ENCODE measurements at regions of chr14 and their contacts with region 1.

Region 1: GRCh38 chr14:20613094-20614037 is 22.2 kb upstream of the RNASE12 start:
- DNase-seq: peak; percentile 88 to 89
- ATAC-seq: peak; percentile 90
- H3K4me3 ChIP-seq: peak overlapping the region; percentile 56 to 96
- H3K27ac ChIP-seq: peak overlapping the region in 1 of 2 donors; percentile 84
- H3K4me1 ChIP-seq: peaks cover 0 to 1% of the 10 kb centered on the region in 2 donors
- H3K27me3 ChIP-seq: no peaks in the 10 kb centered on the region

Region 2: GRCh38 chr14:20305265-20306078 is 307.9 kb before region 1 on chr14 and contains the start of gene TTC5:
- intact Hi-C with region 1: no loop called
- DNase-seq: peak; percentile 88 to 95
- ATAC-seq: peak; percentile 94
- H3K4me3 ChIP-seq: peak within 1 kb of the TSS; percentile 89 to 93
- H3K27ac ChIP-seq: peak within 1 kb of the TSS in 1 of 2 donors; percentile 12
- H3K4me1 ChIP-seq: no peaks in the 10 kb centered on the region
- H3K27me3 ChIP-seq: no peaks in the 10 kb centered on the region
- total RNA-seq, gene TTC5: 12.0 to 15.4 TPM

Region 3: DNA sequence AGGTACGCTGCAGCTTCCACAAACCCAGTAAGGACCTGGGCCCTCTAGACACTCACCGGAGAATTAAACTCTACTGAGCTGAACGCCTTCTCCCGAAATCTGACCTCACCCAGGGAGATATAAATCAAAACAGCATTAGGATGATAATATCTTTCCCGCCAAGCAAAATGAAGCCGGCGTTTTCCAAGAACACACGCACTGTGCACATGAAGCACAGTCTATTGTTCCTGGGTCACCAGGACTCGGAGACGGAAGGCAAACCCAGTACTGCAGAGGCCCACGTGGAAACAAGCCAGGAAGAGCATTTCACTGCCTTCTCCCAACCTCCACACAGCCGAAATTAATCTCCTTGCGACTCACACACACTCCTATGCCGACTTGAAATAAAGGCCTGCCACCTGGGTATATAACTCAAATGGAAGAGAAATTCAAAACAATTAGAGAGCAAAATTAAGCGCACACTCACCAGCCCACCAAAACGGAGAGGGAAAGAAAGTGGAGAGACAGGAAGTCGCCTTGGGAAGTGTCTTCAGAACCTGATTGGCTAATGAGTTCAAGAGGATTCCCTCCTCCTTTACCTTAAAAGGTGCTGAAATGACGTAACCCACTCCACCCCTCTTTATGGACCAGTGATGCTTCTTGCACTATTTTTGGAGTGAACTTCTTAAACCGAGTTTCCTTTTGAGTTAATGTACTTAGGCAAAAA is 280.4 kb before region 1 on chr14 and contains the start of gene CCNB1IP1:
- intact Hi-C with region 1: loop called (anchors 5 kb)
- DNase-seq: peak; percentile 56 to 79
- ATAC-seq: peak; percentile 96
- H3K4me3 ChIP-seq: peak within 1 kb of the TSS; percentile 98
- H3K27ac ChIP-seq: peak within 1 kb of the TSS; percentile 93 to 97
- H3K4me1 ChIP-seq: no peaks in the 10 kb centered on the region
- H3K27me3 ChIP-seq: no peaks in the 10 kb centered on the region
- total RNA-seq, gene CCNB1IP1: 34.6 to 50.9 TPM

Region 4: GRCh38 chr14:20413045-20413799 is 200.1 kb before region 1 on chr14 and contains the start of gene TEP1:
- intact Hi-C with region 1: loop called (anchors 2 to 5 kb)
- DNase-seq: peak; percentile 94 to 96
- ATAC-seq: peak; percentile 96
- H3K4me3 ChIP-seq: peak within 1 kb of the TSS; percentile 87 to 96
- H3K27ac ChIP-seq: peak within 1 kb of the TSS; percentile 84 to 99
- H3K4me1 ChIP-seq: peaks cover 3 to 7% of the 10 kb centered on the region in 2 donors
- H3K27me3 ChIP-seq: no peaks in the 10 kb centered on the region
- total RNA-seq, gene TEP1: 49.0 to 62.4 TPM

Region 5: DNA sequence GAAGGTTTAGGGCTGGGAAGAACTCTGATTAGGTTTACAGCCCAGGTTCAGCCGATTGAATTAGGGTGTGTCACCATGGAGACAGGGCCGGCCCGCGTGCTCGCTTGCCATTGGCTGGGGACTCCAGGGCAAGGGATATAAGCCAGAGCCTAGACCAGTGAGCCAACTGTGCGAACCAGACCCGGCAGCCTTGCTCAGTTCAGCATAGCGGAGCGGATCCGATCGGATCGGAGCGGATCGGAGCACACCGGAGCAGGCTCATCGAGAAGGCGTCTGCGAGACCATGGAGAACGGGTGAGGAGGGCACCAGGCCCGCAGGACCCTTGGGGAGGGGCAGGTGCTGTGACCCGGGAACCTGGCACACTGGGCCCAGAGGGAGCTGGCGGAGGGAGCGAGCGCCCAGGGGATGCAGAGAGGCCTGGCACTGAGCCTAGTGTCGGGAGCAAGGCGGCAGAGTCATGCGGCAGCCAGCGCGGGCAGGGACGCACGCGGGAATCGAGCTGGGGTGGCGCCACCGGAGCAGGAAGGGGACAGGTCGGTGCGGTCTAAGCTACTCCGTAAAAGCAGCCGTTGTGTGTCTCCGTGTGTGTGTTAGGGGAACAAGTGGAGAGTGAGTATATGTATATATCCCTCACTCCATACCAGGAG is 144.0 kb before region 1 on chr14 and contains the start of gene PNP:
- intact Hi-C with region 1: loop called (anchors 2 to 10 kb)
- DNase-seq: peak; percentile 94 to 95
- ATAC-seq: peak; percentile 97
- H3K4me3 ChIP-seq: peak within 1 kb of the TSS; percentile 3 to 54
- H3K27ac ChIP-seq: peak within 1 kb of the TSS in 1 of 2 donors; percentile 33
- H3K4me1 ChIP-seq: peaks cover 0 to 3% of the 10 kb centered on the region in 2 donors
- H3K27me3 ChIP-seq: no peaks in the 10 kb centered on the region
- total RNA-seq, gene PNP: 46.2 to 54.1 TPM

Region 6: GRCh38 chr14:20624495-20625070 is 11.2 kb after region 1 on chr14:
- intact Hi-C with region 1: loop called in 1 of 2 experiments (anchors 1 kb)
- DNase-seq: peak in 1 of 2 donors; percentile 80
- ATAC-seq: peak; percentile 74
- H3K4me3 ChIP-seq: peak overlapping the region in 1 of 2 donors; percentile 12
- H3K27ac ChIP-seq: peak overlapping the region in 1 of 2 donors; percentile 4
- H3K4me1 ChIP-seq: no peaks in the 10 kb centered on the region
- H3K27me3 ChIP-seq: no peaks in the 10 kb centered on the region

Region 7: DNA sequence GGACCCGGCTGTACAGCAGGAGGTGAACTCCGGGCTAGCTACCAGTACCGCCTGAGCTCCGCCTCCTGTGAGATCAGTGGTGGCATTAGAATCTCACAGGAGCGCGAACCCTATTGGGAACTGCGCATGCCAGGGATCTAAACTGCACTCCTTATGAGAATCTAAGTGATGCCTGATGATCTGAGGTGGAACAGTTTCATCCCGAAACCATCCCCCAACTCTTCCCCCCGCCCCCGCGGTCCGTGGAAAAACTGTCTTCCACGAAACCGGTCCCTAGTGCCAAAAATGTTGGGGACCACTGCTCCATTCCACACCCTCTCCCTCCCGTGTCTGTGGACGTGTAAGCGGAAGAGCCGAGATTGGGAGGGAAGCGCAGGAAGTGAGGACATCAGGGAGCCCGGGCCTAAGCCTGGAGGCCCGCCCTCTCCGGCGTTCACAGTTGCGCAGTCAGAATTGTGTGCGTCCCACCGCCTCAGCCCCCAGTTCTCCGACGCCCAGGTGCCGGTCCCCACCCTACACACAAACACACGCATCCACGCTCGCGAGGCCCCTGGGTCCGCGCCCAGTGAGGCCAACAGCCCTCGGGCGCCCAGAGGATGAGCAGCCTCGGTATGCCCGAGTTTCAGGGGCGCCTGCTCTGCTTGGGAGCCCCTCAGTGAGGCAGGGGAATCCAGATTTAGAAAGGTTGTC is 69.2 kb after region 1 on chr14:
- intact Hi-C with region 1: loop called (anchors 1 kb)
- DNase-seq: peak; percentile 94 to 95
- ATAC-seq: peak; percentile 92
- H3K4me3 ChIP-seq: peak overlapping the region; percentile 56 to 96
- H3K27ac ChIP-seq: peak overlapping the region; percentile 78 to 100
- H3K4me1 ChIP-seq: peaks cover 0 to 2% of the 10 kb centered on the region in 2 donors
- H3K27me3 ChIP-seq: no peaks in the 10 kb centered on the region

Region 8: DNA sequence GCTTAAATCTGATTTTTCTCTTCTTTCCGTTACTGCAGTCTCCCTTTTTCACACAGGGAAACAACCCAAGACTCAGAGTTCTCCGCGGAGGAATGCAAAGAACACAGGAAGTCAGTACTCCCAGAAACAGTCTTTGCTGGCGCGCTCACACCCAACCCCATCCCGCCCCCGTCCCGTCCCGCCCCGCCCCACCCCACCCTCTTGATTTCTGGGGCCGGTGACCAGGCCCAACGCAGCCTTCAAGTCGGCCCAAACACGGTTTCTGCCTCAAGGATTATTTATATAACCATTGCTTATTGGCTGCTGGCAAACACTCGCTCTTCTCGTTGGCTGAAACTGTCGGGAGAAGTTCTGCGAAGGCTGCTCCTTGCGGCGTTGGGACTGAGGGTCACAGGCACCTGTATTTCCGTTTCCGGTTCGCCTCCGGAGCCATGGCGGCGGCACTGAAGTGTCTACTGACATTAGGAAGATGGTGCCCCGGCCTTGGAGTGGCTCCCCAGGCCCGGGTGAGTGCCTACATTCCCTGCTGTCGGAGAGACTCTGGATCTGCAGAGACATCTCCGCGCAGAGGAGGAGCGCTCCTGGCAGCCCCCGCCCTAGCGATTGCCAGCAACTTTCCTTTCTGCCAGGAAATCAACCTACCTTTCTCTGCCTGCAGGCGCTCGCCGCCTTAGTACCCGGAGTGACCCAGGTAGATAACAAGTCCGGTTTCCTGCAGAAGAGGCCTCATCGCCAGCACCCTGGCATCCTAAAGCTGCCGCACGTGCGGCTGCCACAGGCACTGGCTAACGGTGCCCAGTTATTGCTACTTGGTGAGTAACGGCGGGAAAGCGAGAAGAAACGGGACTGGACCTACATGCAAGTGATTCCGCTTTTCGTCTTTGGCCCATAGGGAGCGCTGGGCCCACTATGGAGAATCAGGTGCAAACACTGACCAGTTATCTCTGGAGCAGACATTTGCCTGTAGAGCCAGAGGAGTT is 376.5 kb after region 1 on chr14 and contains the start of gene METTL17:
- intact Hi-C with region 1: loop called in 1 of 2 experiments (anchors 10 kb)
- DNase-seq: peak; percentile 94 to 95
- ATAC-seq: peak; percentile 94
- H3K4me3 ChIP-seq: peak within 1 kb of the TSS; percentile 85 to 89
- H3K27ac ChIP-seq: peak within 1 kb of the TSS; percentile 91 to 99
- H3K4me1 ChIP-seq: peaks cover 3 to 10% of the 10 kb centered on the region in 2 donors
- H3K27me3 ChIP-seq: no peaks in the 10 kb centered on the region
- total RNA-seq, gene METTL17: 33.5 to 57.0 TPM

Measured in aorta (tissue), 5 donors.